OCI-LY7 (cell line): ENCODE measurements at regions of chr13 and their contacts with region 1.

Region 1: GRCh38 chr13:44744880-44745633 is 168.9 kb upstream of the TSC22D1 start:
- DNase-seq: no peak
- H3K4me3 ChIP-seq: no peak overlapping the region
- H3K27ac ChIP-seq: no peak overlapping the region
- H3K4me1 ChIP-seq: no peaks in the 10 kb centered on the region
- CTCF ChIP-seq: no peak

Region 2: DNA sequence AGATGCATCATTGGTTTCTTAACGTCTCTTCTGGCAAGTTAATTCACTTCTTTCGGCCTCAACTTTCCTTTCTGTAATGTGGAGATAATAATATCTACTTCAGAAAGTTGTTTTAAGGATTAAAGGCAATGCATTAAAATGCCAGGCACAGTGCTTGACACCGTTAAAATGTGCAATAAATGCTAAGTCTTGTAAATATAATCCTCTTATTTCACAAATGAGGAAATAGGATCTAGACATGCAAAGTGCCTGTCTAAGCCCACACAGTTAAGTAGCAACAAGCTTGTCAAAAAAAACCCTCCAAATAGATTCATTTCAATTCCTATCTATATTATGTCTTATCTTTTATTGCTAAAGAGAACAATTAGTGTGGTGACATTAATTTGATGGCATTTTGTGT is 82.5 kb before region 1 on chr13:
- CTCF ChIA-PET with region 1: no interaction called
- POLR2A ChIA-PET with region 1: interaction called, 13 read pairs
- intact Hi-C with region 1: no loop called
- DNase-seq: no peak
- H3K4me3 ChIP-seq: no peak overlapping the region
- H3K27ac ChIP-seq: no peak overlapping the region
- H3K4me1 ChIP-seq: no peaks in the 10 kb centered on the region
- CTCF ChIP-seq: no peak

Region 3: DNA sequence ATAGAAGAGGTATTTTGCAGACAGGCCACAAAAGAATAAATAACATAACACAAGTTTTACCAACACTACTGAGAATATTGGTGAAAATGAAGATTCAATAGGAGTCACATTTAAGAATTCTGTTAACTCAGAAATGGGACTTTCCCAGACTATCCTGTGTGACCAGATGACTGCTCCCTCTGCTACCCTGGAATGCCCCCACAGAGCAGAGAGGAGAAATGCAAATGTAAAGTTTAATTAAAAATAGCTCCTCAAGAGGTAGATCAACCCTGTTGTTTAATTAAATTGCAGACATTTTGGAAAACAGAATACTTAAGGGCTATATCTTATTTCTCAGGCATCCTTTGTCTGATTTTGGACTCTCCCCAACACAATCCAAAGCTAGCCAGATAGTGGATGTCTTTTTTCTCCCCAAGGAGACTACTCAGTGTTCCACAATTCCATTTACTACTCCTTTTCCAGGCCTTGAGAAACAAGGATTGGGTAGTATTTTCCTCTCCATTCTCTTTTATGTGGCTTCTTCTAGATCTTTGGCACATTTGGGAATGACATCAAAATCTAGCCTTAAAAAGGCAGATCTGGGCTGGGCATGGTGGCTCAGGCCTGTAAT is 64.2 kb before region 1 on chr13:
- CTCF ChIA-PET with region 1: no interaction called
- POLR2A ChIA-PET with region 1: no interaction called
- intact Hi-C with region 1: no loop called
- DNase-seq: no peak
- H3K4me3 ChIP-seq: no peak overlapping the region
- H3K27ac ChIP-seq: no peak overlapping the region
- H3K4me1 ChIP-seq: no peaks in the 10 kb centered on the region
- CTCF ChIP-seq: no peak

Region 4: GRCh38 chr13:44790289-44790688 is 45.2 kb after region 1 on chr13:
- CTCF ChIA-PET with region 1: no interaction called
- POLR2A ChIA-PET with region 1: no interaction called
- intact Hi-C with region 1: no loop called
- DNase-seq: no peak
- H3K4me3 ChIP-seq: no peak overlapping the region
- H3K27ac ChIP-seq: no peak overlapping the region
- H3K4me1 ChIP-seq: no peaks in the 10 kb centered on the region
- CTCF ChIP-seq: no peak